ENCODE measurements at regions of chr2 and their contacts with region 1.

Region 1: GRCh38 chr2:44981136-44982108 is 27.8 kb downstream of the SIX2 start:
- DNase-seq: peak; percentile 77
- H3K4me3 Mint-ChIP-seq: no peak overlapping the region
- H3K27ac Mint-ChIP-seq: no peak overlapping the region
- H3K4me1 Mint-ChIP-seq: peaks cover 9% of the 10 kb centered on the region
- H3K27me3 Mint-ChIP-seq: peaks cover 27% of the 10 kb centered on the region
- CTCF ChIP-seq: peak; percentile 81

Region 2: GRCh38 chr2:45439788-45440773 is 458.7 kb after region 1 on chr2:
- CTCF ChIA-PET with region 1: no interaction called
- intact Hi-C with region 1: loop called (anchors 5 kb)
- DNase-seq: no peak
- H3K4me3 Mint-ChIP-seq: no peak overlapping the region
- H3K27ac Mint-ChIP-seq: no peak overlapping the region
- H3K4me1 Mint-ChIP-seq: no peaks in the 10 kb centered on the region
- H3K27me3 Mint-ChIP-seq: no peaks in the 10 kb centered on the region
- CTCF ChIP-seq: no peak

Region 3: GRCh38 chr2:45494269-45494977 is 513.0 kb after region 1 on chr2:
- CTCF ChIA-PET with region 1: interaction called, 17 read pairs
- intact Hi-C with region 1: loop called (anchors 1 kb)
- DNase-seq: peak; percentile 37
- H3K4me3 Mint-ChIP-seq: no peak overlapping the region
- H3K27ac Mint-ChIP-seq: no peak overlapping the region
- H3K4me1 Mint-ChIP-seq: no peaks in the 10 kb centered on the region
- H3K27me3 Mint-ChIP-seq: no peaks in the 10 kb centered on the region
- CTCF ChIP-seq: peak; percentile 66

Region 4: GRCh38 chr2:45578056-45578809 is 596.8 kb after region 1 on chr2:
- CTCF ChIA-PET with region 1: no interaction called
- intact Hi-C with region 1: loop called (anchors 5 kb)
- DNase-seq: no peak
- H3K4me3 Mint-ChIP-seq: no peak overlapping the region
- H3K27ac Mint-ChIP-seq: no peak overlapping the region
- H3K4me1 Mint-ChIP-seq: no peaks in the 10 kb centered on the region
- H3K27me3 Mint-ChIP-seq: no peaks in the 10 kb centered on the region
- CTCF ChIP-seq: no peak